Adrenal gland (tissue), 19 donors: ENCODE measurements at regions of chr18 and their contacts with region 1.

Region 1: DNA sequence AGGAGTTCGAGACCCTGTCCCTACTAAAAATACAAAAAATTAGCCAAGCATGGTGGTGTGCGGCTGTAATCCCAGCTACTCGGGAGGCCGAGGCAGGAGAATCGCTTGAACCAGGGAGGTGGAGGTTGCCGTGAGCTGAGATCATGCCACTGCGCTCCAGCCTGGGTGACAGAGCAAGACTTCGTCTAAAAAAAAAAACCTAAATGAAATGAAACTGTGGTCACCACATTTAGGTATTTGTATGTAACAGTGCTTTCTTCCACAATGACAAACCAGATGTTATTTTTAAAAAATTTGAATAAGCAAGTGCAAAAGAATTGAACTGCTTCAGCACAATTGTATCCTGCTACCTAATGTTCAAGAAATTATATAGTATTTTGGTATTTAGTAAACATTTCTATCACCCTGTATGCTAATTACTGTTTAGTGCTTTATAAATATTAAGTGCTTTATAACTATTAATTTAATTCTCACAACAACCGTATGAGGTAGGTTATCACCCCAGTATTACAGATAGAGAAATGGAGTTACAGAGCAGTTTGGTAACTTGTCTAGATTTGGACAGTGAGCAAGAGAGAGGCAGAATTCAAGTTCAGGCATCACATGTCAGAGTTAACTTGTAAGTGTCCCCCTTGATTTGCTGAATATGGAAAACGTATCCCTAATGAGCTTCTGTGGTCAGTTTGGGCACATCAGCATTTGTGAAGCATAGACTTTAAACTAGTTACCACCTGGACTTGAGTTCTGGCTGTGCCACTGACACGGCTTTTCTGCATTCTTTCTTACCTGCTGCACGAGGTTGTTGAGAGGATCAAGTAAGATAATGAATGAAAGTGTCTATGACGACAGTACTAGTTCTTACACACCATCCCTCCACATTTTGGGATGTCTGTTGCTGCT is 14.4 kb downstream of the PHLPP1 start:
- DNase-seq: no peak
- H3K4me3 ChIP-seq: no peak overlapping the region
- H3K27ac ChIP-seq: no peak overlapping the region
- H3K4me1 ChIP-seq: peaks cover 5 to 31% of the 10 kb centered on the region in 2 donors
- H3K27me3 ChIP-seq: no peaks in the 10 kb centered on the region
- CTCF ChIP-seq: no peak
- POLR2A ChIP-seq: no peak

Region 2: GRCh38 chr18:62802523-62802922 is 72.8 kb after region 1 on chr18:
- intact Hi-C with region 1: loop called in 1 of 2 experiments (anchors 10 kb)
- DNase-seq: no peak
- H3K4me3 ChIP-seq: no peak overlapping the region
- H3K27ac ChIP-seq: no peak overlapping the region
- H3K4me1 ChIP-seq: peaks cover 8 to 20% of the 10 kb centered on the region in 2 donors
- H3K27me3 ChIP-seq: no peaks in the 10 kb centered on the region
- CTCF ChIP-seq: peak in 1 of 6 experiments; percentile 17
- POLR2A ChIP-seq: no peak